ENCODE measurements at regions of chr12 and their contacts with region 1.

Region 1: DNA sequence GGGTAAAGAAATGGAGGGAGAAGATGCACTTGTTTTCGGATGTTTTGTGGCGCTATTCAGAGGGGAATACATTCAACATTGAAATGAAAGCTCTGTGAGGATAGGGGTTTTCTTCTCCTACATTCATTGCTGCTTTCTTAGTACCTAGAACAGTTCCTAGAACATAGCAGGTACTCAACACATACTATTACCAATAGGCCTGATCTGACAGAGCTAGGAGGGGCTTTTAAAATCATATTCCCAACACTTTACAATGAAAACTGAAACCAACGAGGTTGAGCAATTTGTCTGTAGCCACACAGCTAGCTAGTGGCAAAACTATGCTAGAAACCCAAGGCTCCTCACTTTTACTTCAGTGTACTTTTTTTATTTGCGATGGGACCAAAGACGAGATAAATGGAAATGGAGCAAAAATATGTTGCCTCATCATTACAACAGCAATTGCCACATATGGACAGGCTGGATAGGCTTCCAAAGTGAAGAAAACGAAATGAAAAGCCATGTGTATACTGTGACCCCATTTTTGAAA is 23.1 kb upstream of the IL22 start:
- DNase-seq: no peak
- H3K4me3 ChIP-seq: no peak overlapping the region
- H3K27ac ChIP-seq: no peak overlapping the region
- H3K4me1 ChIP-seq: no peaks in the 10 kb centered on the region
- CTCF ChIP-seq: no peak

Region 2: GRCh38 chr12:66725031-66725430 is 1551.4 kb before region 1 on chr12:
- CTCF ChIA-PET with region 1: no interaction called
- POLR2A ChIA-PET with region 1: no interaction called
- intact Hi-C with region 1: no loop called
- DNase-seq: no peak
- H3K4me3 ChIP-seq: no peak overlapping the region
- H3K27ac ChIP-seq: no peak overlapping the region
- H3K4me1 ChIP-seq: peaks cover 19% of the 10 kb centered on the region
- CTCF ChIP-seq: no peak

Region 3: DNA sequence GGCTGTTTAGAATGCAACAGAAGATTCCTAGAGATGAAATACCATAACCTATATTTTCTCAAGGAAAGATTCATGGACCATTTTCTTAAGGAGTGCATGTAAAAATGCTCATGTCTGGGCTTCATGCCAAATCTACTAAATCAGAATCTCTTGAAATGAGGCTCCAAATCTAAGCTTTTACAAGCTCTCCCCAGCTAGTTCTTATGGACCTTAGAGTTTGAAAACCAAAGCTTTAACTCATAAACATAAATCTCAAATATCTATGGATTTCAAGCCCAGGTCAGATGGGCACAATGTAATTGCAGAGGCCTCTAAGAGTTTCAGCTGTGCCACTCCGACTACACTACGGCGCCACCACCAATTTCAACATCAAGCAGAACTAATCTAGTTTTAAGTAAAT is 1124.6 kb before region 1 on chr12:
- CTCF ChIA-PET with region 1: no interaction called
- POLR2A ChIA-PET with region 1: no interaction called
- intact Hi-C with region 1: no loop called
- DNase-seq: no peak
- H3K4me3 ChIP-seq: no peak overlapping the region
- H3K27ac ChIP-seq: no peak overlapping the region
- H3K4me1 ChIP-seq: no peaks in the 10 kb centered on the region
- CTCF ChIP-seq: no peak

Region 4: DNA sequence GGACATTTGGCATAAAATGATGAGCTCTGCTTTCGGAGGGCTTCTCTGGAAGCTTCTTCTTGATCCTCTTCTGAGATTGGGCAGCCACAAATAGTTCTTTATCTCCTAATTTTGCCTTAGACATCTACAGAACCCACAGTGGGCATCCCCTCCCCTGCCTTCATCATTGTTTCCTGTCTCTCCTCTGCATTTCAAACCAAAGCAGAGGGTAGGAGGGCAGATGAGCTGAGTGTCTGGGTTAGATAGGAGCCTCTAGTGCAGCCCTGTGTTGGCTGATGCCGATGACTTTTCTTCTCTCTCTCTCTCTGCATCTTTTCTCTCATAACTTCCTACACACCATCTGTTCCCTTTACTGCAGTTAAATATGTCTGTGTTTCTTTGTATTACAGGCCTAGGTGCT is 42.3 kb before region 1 on chr12:
- CTCF ChIA-PET with region 1: no interaction called
- POLR2A ChIA-PET with region 1: interaction called, 10 read pairs
- intact Hi-C with region 1: no loop called
- DNase-seq: no peak
- H3K4me3 ChIP-seq: no peak overlapping the region
- H3K27ac ChIP-seq: no peak overlapping the region
- H3K4me1 ChIP-seq: peaks cover 20% of the 10 kb centered on the region
- CTCF ChIP-seq: no peak

Region 5: GRCh38 chr12:68393417-68393816 is 117.0 kb after region 1 on chr12:
- CTCF ChIA-PET with region 1: no interaction called
- POLR2A ChIA-PET with region 1: no interaction called
- intact Hi-C with region 1: no loop called
- DNase-seq: no peak
- H3K4me3 ChIP-seq: no peak overlapping the region
- H3K27ac ChIP-seq: no peak overlapping the region
- H3K4me1 ChIP-seq: no peaks in the 10 kb centered on the region
- CTCF ChIP-seq: no peak